ENCODE measurements at regions of chr12 and their contacts with region 1.

Region 1: DNA sequence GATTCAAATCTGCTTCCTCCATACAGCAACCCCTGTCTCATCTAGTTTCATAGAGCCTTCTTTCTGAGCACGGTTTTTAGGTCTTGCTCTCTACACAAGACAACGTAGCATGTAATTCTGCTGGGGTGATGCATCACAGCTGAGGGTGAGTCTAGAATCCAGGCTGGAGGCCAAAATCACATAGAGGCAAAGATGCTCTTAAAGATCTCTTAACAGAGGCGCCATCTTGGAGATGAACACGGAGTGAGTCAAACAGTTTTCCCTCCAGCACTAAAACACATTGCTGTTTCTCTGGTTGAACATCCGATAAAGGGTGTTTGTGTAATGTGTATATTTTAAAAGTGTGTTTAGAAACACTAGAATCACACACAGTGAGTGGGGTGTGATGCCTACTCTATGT is 78.9 kb downstream of the NOS1 start:
- DNase-seq: no peak
- ATAC-seq: no peak
- H3K4me3 ChIP-seq: no peak overlapping the region
- H3K27ac ChIP-seq: no peak overlapping the region
- H3K4me1 ChIP-seq: no peaks in the 10 kb centered on the region
- H3K27me3 ChIP-seq: peaks cover 0 to 23% (median 8%) of the 10 kb centered on the region in 7 donors
- CTCF ChIP-seq: no peak

Region 2: DNA sequence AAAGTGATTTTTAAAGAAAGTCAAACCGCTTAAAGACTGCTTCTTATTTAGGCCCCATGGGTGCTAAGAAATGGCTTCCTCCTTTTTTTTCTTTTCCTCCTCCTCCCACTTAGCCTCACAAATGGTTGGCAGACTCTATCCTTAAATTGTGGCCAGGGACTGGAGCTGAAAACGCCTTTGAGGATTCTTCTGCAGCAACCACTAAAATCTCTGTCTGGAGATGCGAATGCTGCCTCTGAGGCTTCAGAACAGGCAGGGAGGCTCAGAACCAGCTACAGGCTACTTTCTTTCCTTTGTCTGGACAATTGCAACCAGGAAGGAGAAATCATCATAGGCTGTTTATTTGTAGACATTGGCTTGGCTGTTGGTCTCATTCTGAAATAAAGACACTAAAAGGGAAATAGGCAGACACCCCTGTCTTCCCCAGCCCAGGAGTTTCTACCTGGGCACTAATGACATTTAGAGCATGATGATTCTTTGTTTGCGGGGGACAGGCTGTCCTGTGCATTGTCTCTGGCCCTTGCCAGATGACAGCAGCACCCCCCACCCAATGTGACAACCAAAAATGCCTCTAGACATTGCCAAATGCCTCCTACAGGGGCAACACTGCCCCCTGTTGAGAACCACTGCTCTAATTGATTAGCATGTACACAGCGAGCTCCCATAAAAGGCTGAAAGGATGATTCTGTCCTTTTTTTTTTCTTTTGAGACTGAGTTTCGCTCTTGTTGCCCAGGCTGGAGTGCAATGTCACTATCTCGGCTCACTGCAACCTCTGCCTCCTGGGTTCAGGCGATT is 673.0 kb before region 1 on chr12:
- intact Hi-C with region 1: no loop called
- DNase-seq: no peak
- ATAC-seq: peak in 3 of 8 donors; percentile 16 to 28 (median 20)
- H3K4me3 ChIP-seq: no peak overlapping the region
- H3K27ac ChIP-seq: peak overlapping the region in 5 of 10 donors; percentile 11 to 66 (median 19)
- H3K4me1 ChIP-seq: peaks cover 0 to 29% (median 16%) of the 10 kb centered on the region in 9 donors
- H3K27me3 ChIP-seq: peaks cover 0 to 10% (median 0%) of the 10 kb centered on the region in 7 donors
- CTCF ChIP-seq: peak in 7 of 9 donors; percentile 23 to 48 (median 38)

Region 3: GRCh38 chr12:117321572-117321971 is 39.1 kb after region 1 on chr12:
- intact Hi-C with region 1: loop called in 1 of 10 experiments (anchors 2 kb)
- DNase-seq: no peak
- ATAC-seq: no peak
- H3K4me3 ChIP-seq: no peak overlapping the region
- H3K27ac ChIP-seq: no peak overlapping the region
- H3K4me1 ChIP-seq: no peaks in the 10 kb centered on the region
- H3K27me3 ChIP-seq: peaks cover 0 to 33% (median 11%) of the 10 kb centered on the region in 7 donors
- CTCF ChIP-seq: no peak

Measured in heart right ventricle (tissue), 16 donors.